Activated CD8-positive, alpha-beta T cell treated with anti-CD3 and anti-CD28 coated beads for 36 hours (primary cell): ENCODE measurements at regions of chr11 and their contacts with region 1.

Region 1: DNA sequence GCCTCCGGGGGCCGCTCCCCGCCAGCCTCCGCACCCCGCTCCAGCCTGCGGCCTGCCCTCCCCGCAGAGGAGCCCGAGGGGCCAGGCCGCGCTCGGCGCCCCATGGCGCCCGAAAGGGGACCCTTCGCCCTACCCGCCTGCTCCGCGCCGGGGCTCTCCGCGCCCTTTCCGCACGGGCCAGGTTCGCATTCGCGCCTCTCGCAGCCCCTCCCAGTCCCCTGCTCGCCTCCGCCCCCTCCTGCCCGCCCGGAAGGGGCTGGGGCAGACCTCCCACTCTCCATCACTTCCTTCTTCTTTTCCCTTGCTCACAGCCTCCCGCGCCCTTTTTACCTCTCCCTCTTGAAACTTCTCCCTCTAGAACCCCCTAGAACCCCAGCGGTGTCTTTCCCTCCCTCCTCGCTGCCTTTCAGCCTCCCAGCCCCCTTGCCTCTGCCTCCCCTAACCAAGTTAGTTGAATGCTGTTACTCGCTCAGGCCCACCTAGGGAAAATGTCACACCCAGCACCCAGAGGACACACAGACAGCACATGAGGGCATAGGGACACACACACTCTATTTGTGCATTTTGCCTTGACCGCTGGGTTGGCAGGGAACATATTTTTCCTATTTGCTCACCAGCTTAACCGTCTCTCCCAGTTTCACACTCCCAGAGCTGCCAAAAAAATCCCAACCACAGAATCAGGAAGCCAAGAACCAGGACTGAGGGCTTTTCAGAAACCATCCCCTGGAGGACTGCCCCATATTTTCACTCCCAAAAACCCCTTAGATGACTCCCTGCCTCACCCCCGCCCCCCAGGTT is at the start of gene SLC43A3:
- DNase-seq: peak; percentile 85
- ATAC-seq: peak; percentile 74
- H3K4me3 Mint-ChIP-seq: peak within 1 kb of the TSS; percentile 92
- H3K27ac Mint-ChIP-seq: peak within 1 kb of the TSS; percentile 95
- H3K4me1 Mint-ChIP-seq: peaks cover 34% of the 10 kb centered on the region
- H3K27me3 Mint-ChIP-seq: no peaks in the 10 kb centered on the region
- CTCF ChIP-seq: no peak
- total RNA-seq, gene SLC43A3: 294 to 300 TPM

Region 2: DNA sequence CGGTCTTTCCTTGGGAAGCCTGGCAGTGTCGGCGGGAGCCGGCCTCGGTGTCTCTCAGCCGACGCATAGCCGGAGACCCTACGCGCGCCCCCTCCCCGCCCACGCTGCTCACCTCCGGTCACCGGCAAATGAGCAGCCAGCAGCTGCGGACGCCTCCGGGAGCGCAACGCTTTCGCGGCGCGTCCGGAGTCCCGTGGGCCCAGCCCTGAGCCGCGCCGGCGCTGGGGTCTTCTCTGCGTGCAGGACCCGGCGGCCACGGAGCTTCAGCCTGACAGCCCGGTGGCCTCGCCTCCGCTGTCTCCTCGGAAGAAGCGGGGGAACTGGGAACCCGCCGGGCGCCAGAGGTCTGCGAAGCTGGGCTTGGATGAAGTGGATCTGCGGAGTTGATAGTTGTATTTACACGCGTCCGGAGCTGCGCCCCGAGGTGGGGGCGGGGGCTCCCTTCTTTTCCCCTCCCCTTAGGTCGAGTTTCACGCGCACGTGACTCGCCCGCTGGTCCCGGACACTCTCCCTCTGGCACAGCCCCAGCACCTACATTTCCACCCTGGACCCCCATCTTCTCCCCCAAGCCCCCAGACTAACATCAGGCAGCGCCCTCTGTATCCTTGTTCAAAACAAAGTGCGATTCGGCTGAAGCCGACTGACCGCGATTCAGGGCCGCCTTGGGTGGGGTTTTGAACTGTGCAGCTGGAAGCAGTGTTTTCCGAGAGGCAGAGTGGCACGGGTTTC is 88.4 kb after region 1 on chr11 and contains the start of gene SLC43A1:
- CTCF ChIA-PET with region 1: no interaction called
- POLR2A ChIA-PET with region 1: interaction called, 18 read pairs
- intact Hi-C with region 1: no loop called
- DNase-seq: peak; percentile 48
- ATAC-seq: peak; percentile 29
- H3K4me3 Mint-ChIP-seq: peak within 1 kb of the TSS; percentile 94
- H3K27ac Mint-ChIP-seq: peak within 1 kb of the TSS; percentile 95
- H3K4me1 Mint-ChIP-seq: peaks cover 29% of the 10 kb centered on the region
- H3K27me3 Mint-ChIP-seq: no peaks in the 10 kb centered on the region
- CTCF ChIP-seq: no peak
- total RNA-seq, gene SLC43A1: 32.1 to 34.0 TPM

Region 3: DNA sequence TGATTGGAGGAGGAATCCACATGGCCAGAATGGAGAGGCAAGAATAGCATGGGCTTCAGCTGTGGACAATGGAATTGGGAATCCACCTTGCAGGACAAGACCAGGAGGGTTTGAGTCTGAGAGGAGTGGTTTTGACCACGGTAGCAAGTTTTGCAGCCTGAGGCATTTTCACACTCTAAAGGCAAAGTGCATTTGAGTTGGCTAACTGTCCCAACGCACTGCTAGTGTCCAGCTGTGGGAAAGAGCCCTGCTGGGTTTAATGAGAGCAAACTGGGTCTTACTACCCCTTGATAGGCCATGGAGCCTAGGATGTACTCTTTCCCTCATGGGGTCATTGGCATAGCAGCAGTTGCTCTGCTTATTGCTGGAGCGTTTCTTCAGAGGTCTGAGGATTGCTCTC is 1000.9 kb after region 1 on chr11 and contains the start of gene OR5B2:
- CTCF ChIA-PET with region 1: no interaction called
- POLR2A ChIA-PET with region 1: no interaction called
- intact Hi-C with region 1: no loop called
- DNase-seq: no peak
- ATAC-seq: no peak
- H3K4me3 Mint-ChIP-seq: no peak within 1 kb of the TSS
- H3K27ac Mint-ChIP-seq: no peak within 1 kb of the TSS
- H3K4me1 Mint-ChIP-seq: no peaks in the 10 kb centered on the region
- H3K27me3 Mint-ChIP-seq: peaks cover 2% of the 10 kb centered on the region
- CTCF ChIP-seq: no peak
- total RNA-seq, gene OR5B2: not detected